ENCODE measurements at regions of chrX and their contacts with region 1.

Region 1: GRCh38 chrX:150012647-150013381 is 74.5 kb upstream of the EOLA2 start:
- DNase-seq: no peak
- ATAC-seq: no peak
- H3K4me3 ChIP-seq: no peak overlapping the region
- H3K4me3 Mint-ChIP-seq: no peak overlapping the region
- H3K27ac ChIP-seq: no peak overlapping the region
- H3K27ac Mint-ChIP-seq: no peak overlapping the region
- H3K4me1 ChIP-seq: no peaks in the 10 kb centered on the region
- H3K4me1 Mint-ChIP-seq: no peaks in the 10 kb centered on the region
- H3K27me3 ChIP-seq: no peaks in the 10 kb centered on the region
- H3K27me3 Mint-ChIP-seq: no peaks in the 10 kb centered on the region
- CTCF ChIP-seq: no peak

Region 2: DNA sequence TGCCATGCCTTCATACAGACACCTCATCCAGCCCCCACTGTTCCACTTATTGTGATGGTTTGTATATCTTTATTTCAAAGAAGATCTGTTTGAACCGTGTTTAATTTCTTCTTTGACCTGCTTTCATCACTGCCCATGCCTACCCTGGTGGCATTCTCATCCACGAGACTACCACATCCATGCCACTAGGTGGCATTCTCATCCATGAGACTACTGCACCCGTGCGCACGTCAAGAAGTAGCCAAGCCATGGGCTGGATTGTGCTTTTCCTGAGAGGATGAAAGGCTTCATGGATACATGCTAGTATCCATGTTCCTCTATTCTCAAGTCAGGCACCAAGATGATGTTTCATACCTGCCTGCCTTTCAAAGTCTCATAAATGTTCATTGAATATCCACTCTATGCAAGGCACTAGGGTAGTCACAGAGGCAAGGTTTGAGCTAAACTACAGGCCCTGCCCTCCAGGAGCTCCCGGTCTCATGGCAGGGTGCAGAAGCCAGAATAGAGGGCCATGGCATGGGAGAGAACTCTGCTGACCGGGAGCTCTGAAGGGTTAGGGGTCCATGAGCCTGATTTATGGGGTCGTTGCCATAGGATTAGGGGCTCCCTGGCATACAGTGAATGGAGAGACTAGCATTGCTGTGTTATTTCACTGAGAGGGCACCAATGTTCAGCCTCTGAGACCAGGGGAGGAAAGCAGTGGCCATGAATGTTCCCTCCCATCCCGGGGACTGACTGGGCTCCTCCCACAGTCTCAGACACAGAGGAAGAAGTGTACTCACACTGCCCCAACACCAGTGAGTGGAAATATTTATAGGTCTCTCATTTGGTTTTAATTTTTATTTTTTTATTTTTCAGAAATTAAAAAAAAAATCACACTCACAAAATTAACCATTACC is 49.7 kb before region 1 on chrX:
- CTCF ChIA-PET with region 1: no interaction called
- POLR2A ChIA-PET with region 1: no interaction called
- intact Hi-C with region 1: loop called in 1 of 2 experiments (anchors 1 kb)
- DNase-seq: peak in 4 of 14 experiments; percentile 2 to 41 (median 38)
- ATAC-seq: peak; percentile 43
- H3K4me3 ChIP-seq: no peak overlapping the region
- H3K4me3 Mint-ChIP-seq: no peak overlapping the region
- H3K27ac ChIP-seq: no peak overlapping the region
- H3K27ac Mint-ChIP-seq: no peak overlapping the region
- H3K4me1 ChIP-seq: no peaks in the 10 kb centered on the region
- H3K4me1 Mint-ChIP-seq: no peaks in the 10 kb centered on the region
- H3K27me3 ChIP-seq: no peaks in the 10 kb centered on the region
- H3K27me3 Mint-ChIP-seq: no peaks in the 10 kb centered on the region
- CTCF ChIP-seq: no peak

Region 3: GRCh38 chrX:150219374-150220185 is 206.8 kb after region 1 on chrX:
- CTCF ChIA-PET with region 1: no interaction called
- POLR2A ChIA-PET with region 1: no interaction called
- intact Hi-C with region 1: no loop called
- DNase-seq: no peak
- ATAC-seq: no peak
- H3K4me3 ChIP-seq: no peak overlapping the region
- H3K4me3 Mint-ChIP-seq: no peak overlapping the region
- H3K27ac ChIP-seq: no peak overlapping the region
- H3K27ac Mint-ChIP-seq: no peak overlapping the region
- H3K4me1 ChIP-seq: no peaks in the 10 kb centered on the region
- H3K4me1 Mint-ChIP-seq: no peaks in the 10 kb centered on the region
- H3K27me3 ChIP-seq: no peaks in the 10 kb centered on the region
- H3K27me3 Mint-ChIP-seq: no peaks in the 10 kb centered on the region
- CTCF ChIP-seq: no peak

Measured in CD4-positive, alpha-beta T cell (primary cell).